ENCODE measurements at regions of chr2 and their contacts with region 1.

Region 1: GRCh38 chr2:102473020-102473419 is at the start of gene SLC9A4:
- DNase-seq: peak; percentile 71
- H3K4me3 ChIP-seq: no peak within 1 kb of the TSS
- H3K27ac ChIP-seq: no peak within 1 kb of the TSS
- H3K4me1 ChIP-seq: no peaks in the 10 kb centered on the region
- H3K27me3 ChIP-seq: no peaks in the 10 kb centered on the region
- CTCF ChIP-seq: peak; percentile 84
- total RNA-seq, gene SLC9A4: 0.15 TPM in 1 of 2 donors, not detected in the other

Region 2: DNA sequence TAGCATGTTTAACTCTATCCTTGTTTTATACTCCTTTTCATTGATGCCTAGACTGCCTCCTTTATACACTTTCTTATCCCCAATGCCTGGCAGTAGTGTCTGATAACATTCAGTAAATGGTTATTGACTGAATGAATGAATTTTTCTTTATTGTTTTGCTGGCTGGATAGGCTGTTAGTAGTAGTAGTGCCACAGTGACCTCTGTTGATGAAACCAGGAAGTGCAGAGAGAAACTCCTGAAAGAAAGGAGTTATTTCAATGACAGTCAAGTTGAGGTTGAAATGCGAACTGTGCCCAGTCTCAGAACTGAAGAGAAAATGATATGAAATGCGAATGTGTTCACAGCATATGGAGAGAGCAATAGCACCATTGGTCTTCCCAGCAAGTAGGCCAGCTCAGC is 119.6 kb after region 1 on chr2:
- intact Hi-C with region 1: loop called (anchors 5 kb)
- DNase-seq: peak; percentile 86
- H3K4me3 ChIP-seq: no peak overlapping the region
- H3K27ac ChIP-seq: peak overlapping the region; percentile 8
- H3K4me1 ChIP-seq: peaks cover 3% of the 10 kb centered on the region
- H3K27me3 ChIP-seq: no peaks in the 10 kb centered on the region
- CTCF ChIP-seq: peak; percentile 55

Region 3: GRCh38 chr2:102615622-102616436 is 142.8 kb after region 1 on chr2:
- intact Hi-C with region 1: loop called (anchors 5 kb)
- DNase-seq: no peak
- H3K4me3 ChIP-seq: no peak overlapping the region
- H3K27ac ChIP-seq: no peak overlapping the region
- H3K4me1 ChIP-seq: no peaks in the 10 kb centered on the region
- H3K27me3 ChIP-seq: no peaks in the 10 kb centered on the region
- CTCF ChIP-seq: peak; percentile 78

Region 4: GRCh38 chr2:102703748-102704147 is 230.7 kb after region 1 on chr2:
- intact Hi-C with region 1: loop called (anchors 5 kb)
- DNase-seq: no peak
- H3K4me3 ChIP-seq: no peak overlapping the region
- H3K27ac ChIP-seq: no peak overlapping the region
- H3K4me1 ChIP-seq: no peaks in the 10 kb centered on the region
- H3K27me3 ChIP-seq: no peaks in the 10 kb centered on the region
- CTCF ChIP-seq: peak; percentile 19